Spleen (tissue), 13 donors: ENCODE measurements at regions of chr1 and their contacts with region 1.

Region 1: GRCh38 chr1:226424228-226425003 is 16.5 kb upstream of the PARP1 start:
- DNase-seq: no peak
- H3K4me3 ChIP-seq: no peak overlapping the region
- H3K27ac ChIP-seq: peak overlapping the region in 2 of 8 donors; percentile 31 to 50
- H3K4me1 ChIP-seq: peaks cover 0 to 16% (median 10%) of the 10 kb centered on the region in 6 donors
- H3K27me3 ChIP-seq: no peaks in the 10 kb centered on the region
- CTCF ChIP-seq: peak in 10 of 11 experiments; percentile 7 to 62 (median 52)
- POLR2A ChIP-seq: no peak

Region 2: GRCh38 chr1:226608699-226609505 is 184.5 kb after region 1 on chr1:
- intact Hi-C with region 1: loop called (anchors 10 kb)
- DNase-seq: peak; percentile 88
- H3K4me3 ChIP-seq: no peak overlapping the region
- H3K27ac ChIP-seq: no peak overlapping the region
- H3K4me1 ChIP-seq: peaks cover 0 to 11% (median 4%) of the 10 kb centered on the region in 6 donors
- H3K27me3 ChIP-seq: peaks cover 0 to 12% (median 4%) of the 10 kb centered on the region in 7 donors
- CTCF ChIP-seq: peak; percentile 10 to 92 (median 81)
- POLR2A ChIP-seq: no peak